OCI-LY7 (cell line): ENCODE measurements at regions of chr1 and their contacts with region 1.

Region 1: DNA sequence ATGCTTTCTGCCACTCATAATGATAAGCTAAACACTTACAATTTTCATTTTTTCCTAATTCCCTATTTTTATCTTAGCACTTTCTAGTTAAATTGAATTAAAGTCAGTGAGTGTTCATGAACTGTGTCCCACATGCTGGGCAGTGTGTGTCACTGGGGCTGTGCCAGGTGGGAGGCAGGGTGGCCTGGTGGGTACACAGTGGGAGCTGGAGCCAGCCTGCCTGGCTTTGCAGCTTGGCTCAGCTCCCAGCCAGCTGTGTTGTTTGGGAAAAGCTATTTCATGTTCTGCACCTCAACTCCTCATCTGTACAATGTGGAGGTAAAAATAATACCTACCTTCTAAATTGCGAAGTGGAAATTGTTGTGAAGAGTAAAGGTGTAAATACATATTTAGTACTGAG is 238.4 kb downstream of the PLA2G4A start:
- DNase-seq: no peak
- H3K4me3 ChIP-seq: no peak overlapping the region
- H3K27ac ChIP-seq: no peak overlapping the region
- H3K4me1 ChIP-seq: no peaks in the 10 kb centered on the region
- CTCF ChIP-seq: no peak

Region 2: GRCh38 chr1:187091666-187092065 is 24.5 kb after region 1 on chr1:
- CTCF ChIA-PET with region 1: no interaction called
- POLR2A ChIA-PET with region 1: interaction called, 12 read pairs
- intact Hi-C with region 1: no loop called
- DNase-seq: no peak
- H3K4me3 ChIP-seq: no peak overlapping the region
- H3K27ac ChIP-seq: no peak overlapping the region
- H3K4me1 ChIP-seq: peaks cover 13% of the 10 kb centered on the region
- CTCF ChIP-seq: no peak